Heart right ventricle (tissue), 16 donors: ENCODE measurements at regions of chr4 and their contacts with region 1.

Region 1: GRCh38 chr4:143558823-143559756 is 45.6 kb downstream of the SMARCA5 start:
- DNase-seq: peak; percentile 62 to 69
- ATAC-seq: peak; percentile 89 to 94 (median 92)
- H3K4me3 ChIP-seq: peak overlapping the region; percentile 42 to 72 (median 62)
- H3K27ac ChIP-seq: peak overlapping the region in 9 of 10 donors; percentile 32 to 75 (median 59)
- H3K4me1 ChIP-seq: peaks cover 0 to 18% (median 4%) of the 10 kb centered on the region in 9 donors
- H3K27me3 ChIP-seq: peaks cover 0 to 3% (median 0%) of the 10 kb centered on the region in 7 donors
- CTCF ChIP-seq: peak in 8 of 9 donors; percentile 38 to 86 (median 62)

Region 2: GRCh38 chr4:143625632-143626031 is 66.5 kb after region 1 on chr4:
- intact Hi-C with region 1: loop called in 1 of 10 experiments (anchors 2 kb)
- DNase-seq: no peak
- ATAC-seq: no peak
- H3K4me3 ChIP-seq: no peak overlapping the region
- H3K27ac ChIP-seq: peak overlapping the region in 4 of 10 donors; percentile 13 to 50 (median 42)
- H3K4me1 ChIP-seq: peaks cover 6 to 24% (median 11%) of the 10 kb centered on the region in 9 donors
- H3K27me3 ChIP-seq: no peaks in the 10 kb centered on the region
- CTCF ChIP-seq: no peak

Region 3: DNA sequence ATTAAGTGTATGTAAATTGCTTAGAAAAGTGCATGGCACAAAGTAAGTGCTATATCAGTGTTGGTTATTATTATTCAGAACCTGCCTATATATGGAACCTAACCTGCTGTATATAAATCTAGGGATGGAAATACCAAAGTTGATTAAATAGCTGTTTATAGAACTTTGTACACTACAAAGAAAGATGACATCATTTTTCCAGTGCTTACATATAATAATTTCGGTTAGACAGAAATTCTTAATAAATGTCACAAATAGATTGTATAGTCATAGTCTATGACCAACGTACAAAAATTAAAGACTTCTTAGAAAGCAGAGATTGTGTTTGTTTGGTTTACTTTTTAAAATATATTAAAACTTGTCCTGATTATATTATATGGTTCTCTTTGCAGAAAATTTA is 455.7 kb after region 1 on chr4:
- intact Hi-C with region 1: loop called in 1 of 10 experiments (anchors 10 kb)
- DNase-seq: no peak
- ATAC-seq: no peak
- H3K4me3 ChIP-seq: no peak overlapping the region
- H3K27ac ChIP-seq: no peak overlapping the region
- H3K4me1 ChIP-seq: no peaks in the 10 kb centered on the region
- H3K27me3 ChIP-seq: no peaks in the 10 kb centered on the region
- CTCF ChIP-seq: no peak